Adrenal gland (tissue), 19 donors: ENCODE measurements at regions of chr1 and their contacts with region 1.

Region 1: GRCh38 chr1:118151312-118151937 is 33.6 kb downstream of the SPAG17 start:
- DNase-seq: peak; percentile 26 to 80 (median 56)
- H3K4me3 ChIP-seq: no peak overlapping the region
- H3K27ac ChIP-seq: no peak overlapping the region
- H3K4me1 ChIP-seq: no peaks in the 10 kb centered on the region
- H3K27me3 ChIP-seq: no peaks in the 10 kb centered on the region
- CTCF ChIP-seq: peak; percentile 57 to 77 (median 66)
- POLR2A ChIP-seq: no peak

Region 2: DNA sequence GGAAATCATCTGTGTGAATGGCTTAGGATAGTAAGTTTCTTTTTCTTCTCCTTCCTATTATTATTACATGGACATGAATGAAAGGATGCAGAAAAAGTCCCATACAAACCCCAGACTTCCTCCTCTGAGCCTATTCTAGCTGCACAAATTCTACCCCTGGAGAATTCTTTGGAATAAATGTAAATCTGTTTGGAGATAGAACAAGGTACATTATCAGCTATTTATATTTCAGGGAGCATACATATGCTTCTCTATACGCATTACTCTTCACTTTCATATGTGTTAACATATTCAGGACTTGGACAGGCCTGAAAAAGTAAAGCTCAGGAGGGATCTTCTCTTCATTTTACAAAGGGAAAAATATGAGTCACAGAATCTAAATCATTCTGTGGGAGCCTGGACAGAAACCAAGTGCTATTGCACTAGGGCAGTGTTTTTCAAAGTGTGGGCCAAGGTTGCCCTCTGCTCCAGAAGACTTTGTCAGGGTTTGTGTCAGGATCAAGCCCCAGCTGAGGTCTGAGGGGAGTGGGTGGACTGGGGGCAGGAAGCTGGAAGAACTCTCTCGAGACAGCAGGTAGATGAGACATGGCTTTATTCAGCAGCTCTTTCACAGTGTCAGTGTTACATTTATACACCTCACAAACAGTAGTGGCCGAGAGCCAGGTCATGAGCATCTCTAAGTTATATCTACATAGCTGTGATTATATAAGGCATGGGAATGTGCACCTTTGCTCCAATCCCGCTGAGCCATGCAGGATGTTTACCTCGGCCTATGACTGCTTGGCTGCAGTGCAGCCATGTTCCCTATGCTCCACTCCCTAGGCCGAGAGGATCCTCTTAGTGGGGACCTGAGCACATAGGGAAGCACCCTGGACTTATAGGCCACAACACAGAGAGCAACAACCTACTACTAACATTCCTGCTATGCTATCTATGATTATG is 336.3 kb before region 1 on chr1:
- intact Hi-C with region 1: no loop called
- DNase-seq: peak in 4 of 7 donors; percentile 41 to 75 (median 52)
- H3K4me3 ChIP-seq: no peak overlapping the region
- H3K27ac ChIP-seq: no peak overlapping the region
- H3K4me1 ChIP-seq: no peaks in the 10 kb centered on the region
- H3K27me3 ChIP-seq: no peaks in the 10 kb centered on the region
- CTCF ChIP-seq: no peak
- POLR2A ChIP-seq: no peak

Region 3: DNA sequence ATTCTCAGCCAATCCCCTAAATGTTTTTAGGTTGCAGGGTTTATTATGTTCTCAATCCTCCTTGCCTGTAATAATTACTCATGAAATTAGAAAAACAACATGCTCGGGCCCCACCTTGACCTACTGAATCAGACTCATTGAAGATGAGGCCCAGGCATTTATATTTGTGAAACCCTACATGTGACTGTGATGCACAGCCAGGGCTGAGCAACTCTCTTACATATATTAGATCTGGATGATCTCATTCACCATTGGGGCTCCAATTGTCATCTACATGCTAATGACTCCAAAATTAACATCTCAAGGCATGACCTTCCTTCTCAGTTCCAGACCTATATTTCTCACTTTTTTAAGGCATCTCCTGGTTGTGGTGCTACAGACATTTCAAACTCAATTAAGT is 118.5 kb before region 1 on chr1:
- intact Hi-C with region 1: no loop called
- DNase-seq: no peak
- H3K4me3 ChIP-seq: no peak overlapping the region
- H3K27ac ChIP-seq: no peak overlapping the region
- H3K4me1 ChIP-seq: no peaks in the 10 kb centered on the region
- H3K27me3 ChIP-seq: no peaks in the 10 kb centered on the region
- CTCF ChIP-seq: no peak
- POLR2A ChIP-seq: no peak

Region 4: DNA sequence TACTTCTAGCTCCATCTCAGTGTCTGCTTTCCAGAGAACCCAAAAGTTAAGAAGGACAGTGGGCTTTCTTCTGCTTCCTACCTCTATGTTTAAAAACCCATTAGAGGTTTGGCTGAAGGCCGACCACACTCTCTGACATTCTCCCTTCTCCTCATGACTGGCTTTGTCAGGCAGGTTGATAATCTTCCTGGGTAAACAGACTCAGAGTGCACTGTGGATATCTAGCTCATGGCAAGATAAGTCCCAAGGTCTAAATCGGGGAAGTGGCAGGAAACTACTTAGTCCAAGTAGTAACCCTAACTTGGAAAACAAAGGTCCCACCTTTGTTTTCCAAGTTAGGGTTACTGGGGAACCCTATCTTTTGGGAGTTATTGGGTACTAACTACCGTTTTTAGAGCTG is 195.5 kb after region 1 on chr1:
- intact Hi-C with region 1: no loop called
- DNase-seq: no peak
- H3K4me3 ChIP-seq: no peak overlapping the region
- H3K27ac ChIP-seq: no peak overlapping the region
- H3K4me1 ChIP-seq: no peaks in the 10 kb centered on the region
- H3K27me3 ChIP-seq: no peaks in the 10 kb centered on the region
- CTCF ChIP-seq: no peak
- POLR2A ChIP-seq: no peak

Region 5: GRCh38 chr1:119008483-119009311 is 857.3 kb after region 1 on chr1:
- intact Hi-C with region 1: loop called in 1 of 2 experiments (anchors 10 kb)
- DNase-seq: peak in 6 of 7 donors; percentile 26 to 64 (median 40)
- H3K4me3 ChIP-seq: peak overlapping the region in 1 of 4 donors; percentile 27
- H3K27ac ChIP-seq: no peak overlapping the region
- H3K4me1 ChIP-seq: peaks cover 8 to 14% of the 10 kb centered on the region in 2 donors
- H3K27me3 ChIP-seq: peaks cover 44% of the 10 kb centered on the region
- CTCF ChIP-seq: peak; percentile 32 to 61 (median 54)
- POLR2A ChIP-seq: no peak

Region 6: GRCh38 chr1:119367427-119368124 is 1216.2 kb after region 1 on chr1:
- intact Hi-C with region 1: loop called in 1 of 2 experiments (anchors 10 kb)
- DNase-seq: peak in 1 of 7 donors; percentile 25
- H3K4me3 ChIP-seq: no peak overlapping the region
- H3K27ac ChIP-seq: no peak overlapping the region
- H3K4me1 ChIP-seq: no peaks in the 10 kb centered on the region
- H3K27me3 ChIP-seq: no peaks in the 10 kb centered on the region
- CTCF ChIP-seq: peak; percentile 85 to 99 (median 96)
- POLR2A ChIP-seq: no peak